Common myeloid progenitor, CD34-positive (primary cell): ENCODE measurements at regions of chr10 and their contacts with region 1.

Region 1: GRCh38 chr10:102480396-102480795 is 22.1 kb downstream of the ACTR1A start:
- DNase-seq: no peak
- H3K4me3 ChIP-seq: no peak overlapping the region
- H3K27ac ChIP-seq: no peak overlapping the region
- H3K4me1 ChIP-seq: peaks cover 0 to 2% (median 0%) of the 10 kb centered on the region in 4 experiments
- H3K27me3 ChIP-seq: no peaks in the 10 kb centered on the region

Region 2: GRCh38 chr10:102384053-102384452 is 96.3 kb before region 1 on chr10:
- CTCF ChIA-PET with region 1: interaction called, 16 read pairs
- POLR2A ChIA-PET with region 1: interaction called, 4 read pairs
- DNase-seq: peak in 1 of 3 donors; percentile 51
- H3K4me3 ChIP-seq: no peak overlapping the region
- H3K27ac ChIP-seq: no peak overlapping the region
- H3K4me1 ChIP-seq: no peaks in the 10 kb centered on the region
- H3K27me3 ChIP-seq: no peaks in the 10 kb centered on the region

Region 3: GRCh38 chr10:102420810-102421644 is 59.4 kb before region 1 on chr10 and contains the start of gene FBXL15:
- CTCF ChIA-PET with region 1: interaction called, 35 read pairs
- POLR2A ChIA-PET with region 1: interaction called, 3 read pairs
- DNase-seq: peak; percentile 96 to 98 (median 98)
- H3K4me3 ChIP-seq: peak within 1 kb of the TSS; percentile 87 to 96 (median 90)
- H3K27ac ChIP-seq: peak within 1 kb of the TSS; percentile 47 to 85
- H3K4me1 ChIP-seq: peaks cover 3 to 46% (median 40%) of the 10 kb centered on the region in 4 experiments
- H3K27me3 ChIP-seq: peaks cover 6 to 25% (median 11%) of the 10 kb centered on the region in 5 experiments

Region 4: DNA sequence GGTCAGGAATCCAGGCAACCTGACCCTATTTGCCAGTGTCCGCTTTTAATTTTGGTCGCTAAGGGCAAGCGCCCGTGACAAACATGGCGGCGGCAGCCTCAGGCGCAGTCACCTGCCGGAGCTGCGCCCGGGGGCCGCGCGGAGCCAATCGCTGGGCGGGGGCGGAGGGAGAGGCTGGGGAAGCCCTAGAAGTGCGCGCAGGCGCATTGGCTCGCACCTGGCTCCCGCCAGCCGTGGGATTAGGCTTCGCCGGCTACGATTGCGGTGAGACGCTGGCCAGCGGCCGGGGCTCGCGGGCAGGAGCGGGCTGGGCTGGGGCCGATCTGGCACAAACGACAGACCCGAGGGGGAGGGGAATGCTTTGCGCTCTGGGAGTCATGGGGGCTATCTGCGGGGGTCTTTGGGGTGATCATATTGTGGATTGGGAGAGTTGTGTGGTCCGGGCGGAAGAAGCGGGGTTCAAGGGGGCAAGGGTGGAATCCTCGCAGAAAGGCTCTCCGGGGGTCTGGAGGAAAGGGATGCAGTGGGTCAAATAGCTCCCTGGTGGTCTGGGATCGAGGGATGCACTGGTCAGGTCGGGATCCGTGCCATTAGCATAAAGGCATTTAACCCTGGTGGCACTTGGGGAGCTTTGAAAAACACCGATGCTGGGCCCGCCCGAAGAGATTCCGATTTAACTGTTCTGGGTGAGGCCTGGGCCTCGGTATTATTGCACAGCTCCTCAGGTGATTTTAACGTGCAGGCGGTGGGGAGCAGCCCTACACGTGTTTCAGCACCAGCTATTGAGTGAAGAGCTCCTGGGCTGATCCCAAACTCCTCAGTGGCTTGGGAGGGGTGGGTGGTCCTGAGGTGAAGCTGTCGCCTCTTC is 19.0 kb before region 1 on chr10:
- CTCF ChIA-PET with region 1: interaction called, 13 read pairs
- POLR2A ChIA-PET with region 1: no interaction called
- DNase-seq: peak; percentile 84 to 91 (median 89)
- H3K4me3 ChIP-seq: peak overlapping the region; percentile 49 to 83 (median 68)
- H3K27ac ChIP-seq: peak overlapping the region in 1 of 2 experiments; percentile 58
- H3K4me1 ChIP-seq: peaks cover 0 to 23% (median 15%) of the 10 kb centered on the region in 4 experiments
- H3K27me3 ChIP-seq: peaks cover 0 to 18% (median 0%) of the 10 kb centered on the region in 5 experiments

Region 5: DNA sequence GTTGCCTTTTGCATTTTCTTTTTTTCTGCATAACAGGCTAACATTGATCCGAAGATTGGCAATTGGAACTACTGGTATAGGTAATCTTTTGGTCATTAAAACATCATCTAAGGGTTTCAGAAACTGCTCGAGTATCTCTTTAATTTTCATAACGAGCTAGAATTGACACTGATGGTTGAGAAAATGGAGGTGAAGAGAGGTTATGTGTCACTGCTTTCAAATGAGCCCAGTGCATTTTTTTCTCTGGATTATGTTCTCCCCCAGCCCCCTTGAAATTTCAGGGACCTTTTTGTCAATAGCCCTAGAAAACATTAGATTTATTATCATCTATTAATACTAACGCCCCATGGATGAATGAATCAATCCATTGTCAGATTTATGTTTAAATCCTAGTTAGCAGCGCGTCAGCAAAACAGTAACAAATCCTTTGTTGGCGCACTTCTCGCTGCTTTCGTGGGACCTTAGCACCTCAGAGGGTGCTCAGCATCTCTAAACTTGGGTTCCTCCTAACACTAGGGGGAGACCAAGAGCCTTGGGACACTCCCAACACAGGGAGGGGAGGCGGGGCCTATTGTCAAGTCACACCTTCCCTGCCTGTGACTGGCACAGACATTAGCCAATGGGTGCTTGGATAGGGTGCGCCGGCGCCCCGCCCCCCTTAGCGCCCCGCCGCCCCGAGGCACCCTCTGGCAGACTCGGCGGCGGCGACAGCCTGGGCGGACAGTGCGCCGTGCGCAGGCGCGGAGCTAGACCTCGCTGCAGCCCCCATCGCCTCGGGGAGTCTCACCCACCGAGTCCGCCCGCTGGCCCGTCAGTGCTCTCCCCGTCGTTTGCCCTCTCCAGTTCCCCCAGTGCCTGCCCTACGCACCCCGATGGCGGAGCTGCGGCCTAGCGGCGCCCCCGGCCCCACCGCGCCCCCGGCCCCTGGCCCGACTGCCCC is 23.2 kb after region 1 on chr10 and contains the start of gene SUFU:
- CTCF ChIA-PET with region 1: interaction called, 12 read pairs
- POLR2A ChIA-PET with region 1: no interaction called
- DNase-seq: peak; percentile 99 to 100 (median 99)
- H3K4me3 ChIP-seq: peak within 1 kb of the TSS; percentile 74 to 99 (median 96)
- H3K27ac ChIP-seq: peak within 1 kb of the TSS; percentile 25 to 93
- H3K4me1 ChIP-seq: peaks cover 20 to 51% (median 36%) of the 10 kb centered on the region in 4 experiments
- H3K27me3 ChIP-seq: no peaks in the 10 kb centered on the region